ENCODE measurements at regions of chr9 and their contacts with region 1.

Region 1: GRCh38 chr9:89564352-89564878 is 40.4 kb upstream of the GADD45G start:
- DNase-seq: peak; percentile 91

Region 2: GRCh38 chr9:89247431-89248353 is 316.7 kb before region 1 on chr9:
- in situ Hi-C with region 1: no loop called
- DNase-seq: no peak

Region 3: DNA sequence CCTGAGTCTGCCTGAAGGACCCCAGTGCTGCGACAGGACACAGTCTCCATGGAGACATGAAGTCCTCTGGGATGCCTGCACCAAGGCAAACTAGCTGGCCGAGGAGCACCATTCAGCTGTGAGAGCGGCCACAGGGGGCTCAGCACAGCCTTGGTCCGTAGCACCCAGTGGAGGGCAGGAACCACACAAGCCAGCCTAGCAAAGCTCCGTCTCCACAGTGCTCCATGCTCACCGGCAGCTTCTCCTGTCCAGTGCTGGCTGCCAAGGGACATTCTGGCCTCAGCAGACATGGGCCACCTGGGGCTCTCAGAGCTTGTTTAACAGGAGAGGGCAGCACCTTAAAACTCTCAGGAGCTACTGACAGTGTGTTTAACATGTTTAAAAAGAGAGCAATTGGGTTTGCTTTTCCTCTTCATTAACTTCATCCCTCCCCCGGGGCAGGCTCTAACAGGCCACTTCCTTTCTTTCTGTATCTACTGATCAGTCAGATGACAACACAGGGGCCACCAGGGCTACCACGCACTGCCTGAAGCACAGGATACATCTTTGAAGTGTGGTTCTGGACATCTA is 189.1 kb before region 1 on chr9:
- in situ Hi-C with region 1: loop called (anchors 25 kb)
- DNase-seq: no peak

Region 4: GRCh38 chr9:89701221-89701798 is 136.9 kb after region 1 on chr9:
- in situ Hi-C with region 1: no loop called
- DNase-seq: no peak